ENCODE measurements at regions of chr6 and their contacts with region 1.

Region 1: DNA sequence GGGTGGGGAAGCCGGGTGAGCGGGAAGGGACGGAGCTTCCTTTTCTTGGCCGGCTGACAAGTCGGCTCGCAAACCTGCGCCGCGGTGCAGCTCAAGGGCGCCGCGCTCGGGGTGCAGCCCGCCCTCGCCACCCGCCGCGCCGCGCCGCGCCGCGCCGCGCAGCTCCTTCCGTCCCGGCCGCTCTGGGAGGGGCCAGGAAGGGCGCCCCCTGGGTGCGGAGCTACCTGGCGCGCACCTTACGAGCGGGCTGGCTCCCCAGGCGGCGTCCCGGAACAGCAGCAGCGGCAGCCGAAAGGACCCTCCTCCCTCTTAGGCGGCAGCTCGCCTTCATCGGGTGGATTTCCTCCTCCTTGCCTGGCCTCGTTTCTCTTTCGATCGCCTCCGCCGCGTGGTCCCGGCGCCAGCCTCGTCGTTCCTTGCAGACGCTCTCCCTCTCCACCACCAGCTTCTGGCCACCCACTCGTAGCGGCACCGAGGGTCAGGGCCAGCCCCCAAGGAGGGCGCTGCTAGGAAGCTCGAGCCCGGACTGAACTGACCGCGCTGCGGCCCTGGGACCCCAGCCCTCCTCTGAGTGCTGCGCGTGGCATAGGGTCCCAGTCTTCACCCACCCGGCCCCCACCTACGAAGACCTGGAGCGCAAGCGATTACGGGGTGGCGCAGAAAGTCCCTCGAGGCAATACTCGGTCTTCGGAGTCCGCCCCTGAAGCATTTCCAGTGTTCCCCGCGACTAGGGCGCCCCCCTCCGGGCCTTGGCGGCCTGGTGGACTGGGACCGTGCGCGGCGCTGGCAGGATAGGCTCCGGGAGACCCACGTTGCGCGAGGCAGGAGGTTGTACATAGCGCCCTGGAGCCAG is at the start of gene MAP3K5:
- DNase-seq: peak; percentile 89
- H3K4me3 ChIP-seq: peak within 1 kb of the TSS; percentile 60 to 86 (median 70)
- H3K27ac ChIP-seq: peak within 1 kb of the TSS; percentile 51
- H3K4me1 ChIP-seq: peaks cover 16% of the 10 kb centered on the region
- H3K27me3 ChIP-seq: no peaks in the 10 kb centered on the region
- CTCF ChIP-seq: peak; percentile 85 to 93
- POLR2A ChIP-seq: peak; percentile 23
- total RNA-seq, gene MAP3K5: 5.0 and 7.0 TPM in 2 replicates

Region 2: DNA sequence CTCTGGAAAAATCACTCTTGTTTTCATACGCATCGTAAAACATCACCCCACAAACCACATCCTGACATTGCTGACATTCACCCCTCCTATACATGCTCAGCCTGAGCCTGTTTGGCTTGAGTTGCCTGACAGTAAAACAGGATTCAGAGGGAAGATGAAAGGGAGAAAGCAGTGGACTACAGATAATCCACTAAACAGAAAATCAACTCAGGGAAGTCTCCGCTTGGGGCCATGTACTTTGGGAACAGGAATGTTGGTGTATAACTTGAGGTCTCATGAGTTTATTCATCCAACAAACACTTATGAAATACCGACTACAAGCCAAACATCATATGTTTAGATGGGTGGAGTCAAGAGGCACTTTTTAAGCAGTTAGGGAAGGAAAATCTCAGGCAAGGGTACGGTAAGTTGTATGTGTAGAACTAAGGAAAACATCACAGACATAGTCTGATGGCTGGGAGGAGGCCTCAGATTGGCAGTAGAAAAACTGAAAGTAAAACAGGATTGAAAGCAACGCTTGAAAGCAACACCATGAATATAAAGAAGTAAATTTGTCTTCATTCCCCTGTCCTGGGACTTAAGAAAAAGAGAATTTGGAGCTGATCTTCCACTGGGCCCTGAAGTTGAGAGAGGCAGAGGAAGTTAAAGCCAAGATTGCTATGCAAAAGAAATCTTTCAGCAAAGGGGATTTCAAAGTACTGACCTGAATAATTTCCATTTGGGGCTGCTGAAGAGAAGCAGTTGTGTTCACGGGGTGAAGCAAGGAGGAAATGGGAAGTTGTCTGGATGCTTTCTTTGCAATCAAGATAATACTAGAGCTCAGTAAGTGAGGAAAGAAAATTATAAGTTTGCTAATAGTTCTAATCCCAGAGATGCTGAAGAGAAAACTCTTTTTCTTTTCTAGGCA is 912.3 kb before region 1 on chr6:
- CTCF ChIA-PET with region 1: no interaction called
- POLR2A ChIA-PET with region 1: no interaction called
- dilution Hi-C with region 1: no loop called
- intact Hi-C with region 1: no loop called
- DNase-seq: no peak
- H3K4me3 ChIP-seq: no peak overlapping the region
- H3K27ac ChIP-seq: no peak overlapping the region
- H3K4me1 ChIP-seq: no peaks in the 10 kb centered on the region
- H3K27me3 ChIP-seq: no peaks in the 10 kb centered on the region
- CTCF ChIP-seq: no peak
- POLR2A ChIP-seq: no peak

Region 3: GRCh38 chr6:136180704-136181511 is 611.7 kb before region 1 on chr6:
- CTCF ChIA-PET with region 1: no interaction called
- POLR2A ChIA-PET with region 1: no interaction called
- dilution Hi-C with region 1: no loop called
- intact Hi-C with region 1: no loop called
- DNase-seq: no peak
- H3K4me3 ChIP-seq: no peak overlapping the region
- H3K27ac ChIP-seq: no peak overlapping the region
- H3K4me1 ChIP-seq: no peaks in the 10 kb centered on the region
- H3K27me3 ChIP-seq: no peaks in the 10 kb centered on the region
- CTCF ChIP-seq: no peak
- POLR2A ChIP-seq: no peak

Region 4: GRCh38 chr6:136317021-136317694 is 475.5 kb before region 1 on chr6:
- CTCF ChIA-PET with region 1: interaction called, 11 read pairs
- POLR2A ChIA-PET with region 1: no interaction called
- dilution Hi-C with region 1: no loop called
- intact Hi-C with region 1: no loop called
- DNase-seq: peak; percentile 59
- H3K4me3 ChIP-seq: no peak overlapping the region
- H3K27ac ChIP-seq: no peak overlapping the region
- H3K4me1 ChIP-seq: no peaks in the 10 kb centered on the region
- H3K27me3 ChIP-seq: peaks cover 5 to 7% of the 10 kb centered on the region in 2 experiments
- CTCF ChIP-seq: peak; percentile 69 to 74
- POLR2A ChIP-seq: no peak

Region 5: GRCh38 chr6:136600818-136601217 is 191.8 kb before region 1 on chr6:
- CTCF ChIA-PET with region 1: interaction called, 14 read pairs
- POLR2A ChIA-PET with region 1: no interaction called
- dilution Hi-C with region 1: no loop called
- intact Hi-C with region 1: no loop called
- DNase-seq: peak; percentile 83
- H3K4me3 ChIP-seq: no peak overlapping the region
- H3K27ac ChIP-seq: no peak overlapping the region
- H3K4me1 ChIP-seq: no peaks in the 10 kb centered on the region
- H3K27me3 ChIP-seq: no peaks in the 10 kb centered on the region
- CTCF ChIP-seq: no peak
- POLR2A ChIP-seq: no peak

Region 6: GRCh38 chr6:136635615-136636014 is 157.0 kb before region 1 on chr6:
- CTCF ChIA-PET with region 1: interaction called, 708 read pairs
- POLR2A ChIA-PET with region 1: no interaction called
- dilution Hi-C with region 1: no loop called
- intact Hi-C with region 1: no loop called
- DNase-seq: no peak
- H3K4me3 ChIP-seq: no peak overlapping the region
- H3K27ac ChIP-seq: no peak overlapping the region
- H3K4me1 ChIP-seq: no peaks in the 10 kb centered on the region
- H3K27me3 ChIP-seq: no peaks in the 10 kb centered on the region
- CTCF ChIP-seq: no peak
- POLR2A ChIP-seq: no peak

Region 7: GRCh38 chr6:136710877-136711552 is 81.6 kb before region 1 on chr6:
- CTCF ChIA-PET with region 1: interaction called, 62 read pairs
- POLR2A ChIA-PET with region 1: no interaction called
- dilution Hi-C with region 1: no loop called
- intact Hi-C with region 1: loop called (anchors 1 kb)
- DNase-seq: no peak
- H3K4me3 ChIP-seq: no peak overlapping the region
- H3K27ac ChIP-seq: no peak overlapping the region
- H3K4me1 ChIP-seq: peaks cover 4% of the 10 kb centered on the region
- H3K27me3 ChIP-seq: no peaks in the 10 kb centered on the region
- CTCF ChIP-seq: no peak
- POLR2A ChIP-seq: no peak

Region 8: GRCh38 chr6:136745300-136745699 is 47.3 kb before region 1 on chr6:
- CTCF ChIA-PET with region 1: interaction called, 14 read pairs
- POLR2A ChIA-PET with region 1: no interaction called
- dilution Hi-C with region 1: no loop called
- intact Hi-C with region 1: no loop called
- DNase-seq: no peak
- H3K4me3 ChIP-seq: no peak overlapping the region
- H3K27ac ChIP-seq: no peak overlapping the region
- H3K4me1 ChIP-seq: no peaks in the 10 kb centered on the region
- H3K27me3 ChIP-seq: no peaks in the 10 kb centered on the region
- CTCF ChIP-seq: no peak
- POLR2A ChIP-seq: no peak

Region 9: GRCh38 chr6:136921936-136922684 is 129.5 kb after region 1 on chr6 and contains the start of gene SLC35D3:
- CTCF ChIA-PET with region 1: interaction called, 3 read pairs
- POLR2A ChIA-PET with region 1: no interaction called
- dilution Hi-C with region 1: no loop called
- intact Hi-C with region 1: loop called (anchors 5 kb)
- DNase-seq: peak; percentile 14
- H3K4me3 ChIP-seq: peak within 1 kb of the TSS; percentile 33 to 50 (median 43)
- H3K27ac ChIP-seq: no peak within 1 kb of the TSS
- H3K4me1 ChIP-seq: peaks cover 23% of the 10 kb centered on the region
- H3K27me3 ChIP-seq: peaks cover 32 to 53% of the 10 kb centered on the region in 2 experiments
- CTCF ChIP-seq: no peak
- POLR2A ChIP-seq: no peak
- total RNA-seq, gene SLC35D3: not detected in 2 replicates

Region 10: GRCh38 chr6:137043710-137044365 is 251.2 kb after region 1 on chr6:
- CTCF ChIA-PET with region 1: no interaction called
- POLR2A ChIA-PET with region 1: no interaction called
- dilution Hi-C with region 1: no loop called
- intact Hi-C with region 1: no loop called
- DNase-seq: peak; percentile 39
- H3K4me3 ChIP-seq: peak overlapping the region; percentile 55 to 71 (median 66)
- H3K27ac ChIP-seq: no peak overlapping the region
- H3K4me1 ChIP-seq: no peaks in the 10 kb centered on the region
- H3K27me3 ChIP-seq: peaks cover 13 to 38% of the 10 kb centered on the region in 2 experiments
- CTCF ChIP-seq: no peak
- POLR2A ChIP-seq: no peak

Region 11: GRCh38 chr6:137402231-137402630 is 609.6 kb after region 1 on chr6:
- CTCF ChIA-PET with region 1: no interaction called
- POLR2A ChIA-PET with region 1: no interaction called
- dilution Hi-C with region 1: no loop called
- intact Hi-C with region 1: no loop called
- DNase-seq: no peak
- H3K4me3 ChIP-seq: no peak overlapping the region
- H3K27ac ChIP-seq: no peak overlapping the region
- H3K4me1 ChIP-seq: no peaks in the 10 kb centered on the region
- H3K27me3 ChIP-seq: peaks cover 1 to 3% of the 10 kb centered on the region in 2 experiments
- CTCF ChIP-seq: no peak
- POLR2A ChIP-seq: no peak

Measured in endothelial cell of umbilical vein (primary cell).